HepG2 (cell line): ENCODE measurements at regions of chr1 and their contacts with region 1.

Region 1: GRCh38 chr1:153775458-153776327 is 486 bp downstream of the SLC27A3 start:
- DNase-seq: no peak
- ATAC-seq: peak; percentile 76
- H3K4me3 ChIP-seq: peak overlapping the region; percentile 70 to 83 (median 75)
- H3K27ac ChIP-seq: peak overlapping the region; percentile 53
- H3K4me1 ChIP-seq: peaks cover 50% of the 10 kb centered on the region
- H3K27me3 ChIP-seq: no peaks in the 10 kb centered on the region
- CTCF ChIP-seq: peak; percentile 31
- EP300 ChIP-seq: no peak
- POLR2A ChIP-seq: peak in 1 of 2 experiments; percentile 77; a peak in 1 of 4 replicates
- RAD21 ChIP-seq: 0 out of 2 replicates have a peak, but pooled peaks have one; percentile 8

Region 2: DNA sequence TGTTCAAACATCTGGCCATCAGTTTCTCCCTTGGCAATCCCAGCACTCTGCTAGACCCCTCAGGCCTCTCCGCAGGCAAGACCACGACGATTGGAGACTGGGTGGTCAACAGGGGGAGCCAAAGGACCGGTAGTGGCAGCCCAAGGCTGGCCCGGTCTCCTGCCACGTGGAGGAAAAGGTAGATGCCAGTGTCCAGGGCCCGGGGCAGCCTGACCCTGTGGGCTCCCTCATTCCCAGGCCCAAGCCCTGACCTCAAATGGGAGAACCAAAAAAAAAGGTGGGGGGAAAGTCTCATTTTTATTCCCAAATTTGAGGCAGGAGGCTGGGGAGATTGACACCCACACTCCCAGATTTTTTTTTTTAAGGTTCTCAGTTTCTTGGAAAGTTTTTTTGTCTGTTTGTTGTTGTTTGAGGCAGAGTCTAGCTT is 264.7 kb before region 1 on chr1:
- CTCF ChIA-PET with region 1: no interaction called
- POLR2A ChIA-PET with region 1: no interaction called
- in situ Hi-C with region 1: loop called (anchors 10 kb)
- intact Hi-C with region 1: no loop called
- DNase-seq: peak; percentile 71
- ATAC-seq: peak; percentile 85
- H3K4me3 ChIP-seq: no peak overlapping the region
- H3K27ac ChIP-seq: no peak overlapping the region
- H3K4me1 ChIP-seq: peaks cover 35% of the 10 kb centered on the region
- H3K27me3 ChIP-seq: no peaks in the 10 kb centered on the region; a peak in 3 of 5 replicates
- CTCF ChIP-seq: peak; percentile 97
- EP300 ChIP-seq: no peak
- POLR2A ChIP-seq: no peak
- RAD21 ChIP-seq: peak; percentile 95

Region 3: DNA sequence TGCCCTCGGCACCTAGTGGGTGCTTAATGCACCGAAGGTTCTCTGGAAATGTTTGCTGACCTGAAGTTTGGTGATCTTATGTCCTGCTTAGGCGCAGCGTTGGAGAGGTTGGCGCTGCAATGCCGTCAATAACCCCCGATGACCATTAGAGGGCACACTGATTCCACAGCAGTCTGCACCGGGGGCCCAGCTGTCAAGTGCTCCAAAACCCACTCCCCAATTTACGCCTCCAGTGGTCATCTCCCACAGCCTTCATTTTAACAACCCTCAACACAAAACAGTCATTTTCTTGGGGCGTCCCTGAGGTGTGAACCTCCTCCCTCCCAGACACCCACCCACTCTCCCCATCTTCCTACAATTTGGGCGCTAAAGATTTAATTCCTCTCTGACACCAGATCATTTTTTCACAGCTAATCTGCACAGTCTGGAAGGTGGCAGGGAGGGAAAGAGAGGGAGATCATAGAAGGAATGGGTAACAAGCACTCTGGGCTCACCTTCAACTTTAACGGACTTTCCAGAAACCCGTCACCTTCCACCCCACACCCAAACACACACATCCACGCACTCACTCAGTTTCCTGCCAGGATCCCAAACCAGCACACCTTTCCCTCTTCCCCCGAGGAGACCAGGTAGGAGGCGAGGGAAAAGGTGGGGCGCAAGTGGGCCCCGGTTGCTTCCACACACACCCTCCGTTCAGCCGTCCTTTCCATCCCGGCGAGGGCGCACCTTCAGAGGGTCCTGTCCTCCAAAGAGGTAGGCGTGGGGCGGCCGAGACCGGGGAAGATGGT is 97.8 kb before region 1 on chr1:
- CTCF ChIA-PET with region 1: interaction called, 11 read pairs
- POLR2A ChIA-PET with region 1: no interaction called
- in situ Hi-C with region 1: loop called (anchors 5 kb)
- intact Hi-C with region 1: loop called (anchors 1 kb)
- DNase-seq: no peak
- ATAC-seq: peak; percentile 58
- H3K4me3 ChIP-seq: peak overlapping the region in 2 of 3 experiments; percentile 57 to 72; a peak in 4 of 6 replicates
- H3K27ac ChIP-seq: no peak overlapping the region
- H3K4me1 ChIP-seq: peaks cover 25% of the 10 kb centered on the region
- H3K27me3 ChIP-seq: peaks cover 20 to 51% of the 10 kb centered on the region in 2 experiments
- CTCF ChIP-seq: peak; percentile 92
- EP300 ChIP-seq: no peak
- POLR2A ChIP-seq: no peak
- RAD21 ChIP-seq: peak; percentile 88

Region 4: DNA sequence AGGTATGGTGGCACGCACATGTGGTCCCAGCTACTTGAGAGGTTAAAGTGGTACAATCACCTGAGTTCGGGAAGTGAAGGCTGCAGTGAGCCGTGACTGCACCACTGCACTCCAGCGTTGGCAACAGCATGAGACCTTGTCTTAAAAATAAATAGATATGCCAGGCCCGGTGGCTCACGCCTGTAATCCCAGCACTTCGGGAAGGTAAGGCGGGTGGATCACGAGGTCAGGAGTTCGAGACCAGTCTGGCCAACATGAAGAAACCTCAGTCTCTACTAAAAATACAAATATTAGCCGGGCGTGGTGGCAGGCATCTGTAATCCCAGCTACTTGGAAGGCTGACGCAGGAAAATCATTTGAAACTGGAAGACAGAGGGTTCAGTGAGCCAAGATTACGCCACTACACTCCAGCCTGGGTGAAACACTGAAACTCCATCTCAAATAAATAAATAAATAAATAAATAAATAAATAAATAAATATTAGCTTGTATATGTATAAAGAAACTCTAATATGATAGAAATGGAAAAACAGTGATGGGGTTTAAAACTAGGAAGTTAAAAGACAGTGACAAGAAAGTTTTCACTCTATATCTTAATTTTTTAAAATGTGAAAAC is 128.3 kb after region 1 on chr1:
- CTCF ChIA-PET with region 1: no interaction called
- POLR2A ChIA-PET with region 1: no interaction called
- in situ Hi-C with region 1: no loop called
- intact Hi-C with region 1: no loop called
- DNase-seq: no peak
- ATAC-seq: no peak
- H3K4me3 ChIP-seq: no peak overlapping the region
- H3K27ac ChIP-seq: no peak overlapping the region
- H3K4me1 ChIP-seq: no peaks in the 10 kb centered on the region
- H3K27me3 ChIP-seq: no peaks in the 10 kb centered on the region
- CTCF ChIP-seq: no peak
- EP300 ChIP-seq: no peak
- POLR2A ChIP-seq: no peak
- RAD21 ChIP-seq: no peak